Activated B cell treated with CpG ODN at 0.5 μM for 24 hours (primary cell): ENCODE measurements at regions of chr12 and their contacts with region 1.

Region 1: DNA sequence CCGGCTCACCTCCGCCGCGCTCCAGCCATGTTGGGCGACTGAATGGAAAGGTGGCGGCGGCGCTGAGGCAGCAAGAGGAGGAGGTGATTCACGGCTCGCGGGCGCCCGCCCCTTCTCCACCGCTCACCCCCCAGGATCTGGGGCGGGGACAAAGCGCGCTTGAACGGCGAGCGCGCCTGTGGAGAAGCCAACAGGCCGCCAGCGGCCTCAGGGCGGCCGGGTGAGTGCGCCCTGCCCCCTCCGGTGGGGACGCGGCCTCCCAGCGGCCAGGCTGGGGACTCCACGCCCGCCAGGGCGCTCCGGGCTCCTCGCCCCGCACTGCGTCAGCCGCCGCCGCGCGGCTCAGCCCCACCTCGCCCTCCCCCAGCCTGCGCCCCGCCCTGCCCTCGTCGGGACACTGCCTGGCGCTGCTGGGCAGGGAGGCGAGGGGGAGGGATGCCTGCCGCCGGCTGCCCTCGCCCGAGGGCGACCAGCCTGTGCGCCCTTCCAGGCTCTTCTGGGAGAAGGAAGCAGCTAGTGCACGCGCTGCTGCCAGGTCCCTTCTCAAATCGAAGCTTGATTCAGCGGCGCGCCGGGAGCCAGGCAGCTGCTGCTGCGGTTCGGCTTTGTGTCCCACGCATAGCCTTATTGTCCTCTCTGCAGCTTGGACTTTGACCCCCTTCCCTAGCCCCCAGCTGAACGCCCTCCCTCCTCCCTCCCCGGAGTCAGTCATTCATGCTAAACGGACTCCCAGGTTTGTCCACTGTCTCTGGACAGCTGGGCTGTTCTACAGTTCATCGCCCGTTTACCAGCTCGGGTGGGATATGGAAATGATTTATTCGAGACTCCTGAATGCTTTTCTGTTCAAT is at the start of gene KIF21A:
- DNase-seq: peak; percentile 65
- ATAC-seq: peak; percentile 91
- H3K4me3 Mint-ChIP-seq: peak within 1 kb of the TSS; percentile 82
- H3K27ac Mint-ChIP-seq: peak within 1 kb of the TSS; percentile 61
- H3K4me1 Mint-ChIP-seq: peaks cover 16% of the 10 kb centered on the region
- H3K27me3 Mint-ChIP-seq: peaks cover 31% of the 10 kb centered on the region
- CTCF ChIP-seq: no peak
- total RNA-seq, gene KIF21A: 6.1 and 7.6 TPM in 2 replicates

Region 2: DNA sequence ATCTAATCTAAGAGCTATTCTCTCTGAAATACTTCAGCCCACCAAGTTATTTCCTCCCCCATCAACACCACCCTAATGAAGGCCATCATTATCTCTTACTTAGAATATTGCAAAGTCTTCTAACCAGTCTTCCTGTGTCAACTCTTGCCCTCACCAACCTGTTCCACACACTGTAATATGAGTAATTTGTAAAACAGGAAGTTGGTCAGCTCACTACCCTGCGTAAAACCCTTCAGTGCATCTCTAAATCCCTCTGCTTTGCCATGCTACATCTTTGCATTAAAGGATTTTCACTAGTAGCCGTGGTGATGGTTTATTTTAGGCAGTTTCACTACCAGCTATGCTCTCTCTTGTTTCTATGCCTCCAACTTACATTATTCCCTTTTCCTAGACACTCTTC is 70.4 kb before region 1 on chr12:
- CTCF ChIA-PET with region 1: no interaction called
- POLR2A ChIA-PET with region 1: interaction called, 3 read pairs
- intact Hi-C with region 1: loop called (anchors 5 kb)
- DNase-seq: no peak
- ATAC-seq: peak; percentile 34
- H3K4me3 Mint-ChIP-seq: no peak overlapping the region
- H3K27ac Mint-ChIP-seq: no peak overlapping the region
- H3K4me1 Mint-ChIP-seq: peaks cover 2% of the 10 kb centered on the region
- H3K27me3 Mint-ChIP-seq: no peaks in the 10 kb centered on the region
- CTCF ChIP-seq: no peak

Region 3: GRCh38 chr12:39427360-39427808 is 15.9 kb before region 1 on chr12:
- CTCF ChIA-PET with region 1: no interaction called
- POLR2A ChIA-PET with region 1: no interaction called
- intact Hi-C with region 1: no loop called
- DNase-seq: no peak
- ATAC-seq: no peak
- H3K4me3 Mint-ChIP-seq: no peak overlapping the region
- H3K27ac Mint-ChIP-seq: no peak overlapping the region
- H3K4me1 Mint-ChIP-seq: no peaks in the 10 kb centered on the region
- H3K27me3 Mint-ChIP-seq: no peaks in the 10 kb centered on the region
- CTCF ChIP-seq: no peak